ENCODE measurements at regions of chr18 and their contacts with region 1.

Region 1: GRCh38 chr18:25459814-25460213 is 107.8 kb upstream of the ZNF521 start:
- DNase-seq: no peak
- ATAC-seq: peak; percentile 56

Region 2: GRCh38 chr18:24656551-24657443 is 803.0 kb before region 1 on chr18:
- intact Hi-C with region 1: loop called (anchors 2 kb)
- DNase-seq: no peak
- ATAC-seq: no peak

Region 3: DNA sequence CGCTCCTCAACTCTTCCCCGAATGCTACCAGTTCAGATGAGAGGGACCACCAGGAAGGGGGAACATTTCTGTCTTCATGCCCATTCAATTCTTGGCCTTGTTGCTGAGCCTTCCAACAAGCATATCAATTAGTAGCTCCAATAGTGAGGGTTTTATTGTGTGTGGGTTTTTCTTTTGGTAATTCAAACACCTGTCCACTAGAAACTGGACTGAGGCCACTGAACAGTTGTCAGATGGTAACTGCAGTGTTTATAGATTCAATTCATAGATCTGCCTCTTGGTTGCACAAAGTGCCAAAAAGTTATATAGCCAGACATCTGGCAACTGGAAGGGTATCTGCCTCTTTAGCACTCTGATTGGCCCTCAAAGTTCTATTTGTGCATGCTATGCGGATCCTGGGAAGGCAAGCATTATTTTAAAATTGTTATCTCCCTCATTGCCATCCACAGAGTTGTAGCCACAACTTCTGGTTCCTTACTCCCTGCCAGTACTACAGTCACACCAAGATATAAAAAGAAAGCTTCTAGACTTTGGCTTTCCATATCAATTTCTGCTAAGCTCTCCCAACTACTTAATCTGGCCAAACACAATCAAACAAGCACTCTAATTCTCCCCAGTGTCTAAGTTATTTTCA is 24.5 kb before region 1 on chr18:
- intact Hi-C with region 1: no loop called
- DNase-seq: no peak
- ATAC-seq: no peak

Region 4: GRCh38 chr18:25561918-25562317 is 102.1 kb after region 1 on chr18:
- intact Hi-C with region 1: no loop called
- DNase-seq: no peak
- ATAC-seq: no peak

Region 5: GRCh38 chr18:26370037-26370436 is 910.2 kb after region 1 on chr18:
- intact Hi-C with region 1: no loop called
- DNase-seq: no peak
- ATAC-seq: no peak